ENCODE measurements at regions of chr18 and their contacts with region 1.

Region 1: DNA sequence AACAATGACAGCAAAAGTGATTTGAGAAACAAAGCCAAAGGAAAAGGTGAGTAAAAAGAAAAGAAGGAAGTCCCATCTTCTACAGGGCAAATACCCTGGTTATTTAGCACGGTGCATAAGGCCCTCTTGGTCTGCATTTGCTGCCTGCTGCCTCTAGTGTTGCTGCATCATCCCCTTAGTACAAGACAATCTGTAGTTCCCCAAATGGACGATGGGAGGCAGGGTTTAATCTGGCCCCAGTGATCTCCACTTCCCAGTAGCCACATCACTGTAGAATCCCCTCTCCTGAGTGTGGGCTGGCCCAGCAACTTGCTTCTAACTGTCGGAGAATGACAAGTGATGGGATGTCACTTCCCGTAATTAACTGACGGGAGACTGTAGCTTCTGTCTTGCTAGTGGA is 85.1 kb downstream of the CTAGE1 start:
- DNase-seq: no peak
- ATAC-seq: no peak
- H3K4me3 ChIP-seq: no peak overlapping the region
- H3K27ac ChIP-seq: no peak overlapping the region
- H3K4me1 ChIP-seq: no peaks in the 10 kb centered on the region
- H3K27me3 ChIP-seq: no peaks in the 10 kb centered on the region
- CTCF ChIP-seq: no peak
- POLR2A ChIP-seq: no peak

Region 2: GRCh38 chr18:21904856-21905255 is 427.7 kb before region 1 on chr18:
- in situ Hi-C with region 1: no loop called
- intact Hi-C with region 1: no loop called
- DNase-seq: no peak
- ATAC-seq: no peak
- H3K4me3 ChIP-seq: no peak overlapping the region
- H3K27ac ChIP-seq: no peak overlapping the region
- H3K4me1 ChIP-seq: no peaks in the 10 kb centered on the region
- H3K27me3 ChIP-seq: peaks cover 0 to 4% (median 0%) of the 10 kb centered on the region in 3 donors
- CTCF ChIP-seq: no peak
- POLR2A ChIP-seq: no peak

Region 3: DNA sequence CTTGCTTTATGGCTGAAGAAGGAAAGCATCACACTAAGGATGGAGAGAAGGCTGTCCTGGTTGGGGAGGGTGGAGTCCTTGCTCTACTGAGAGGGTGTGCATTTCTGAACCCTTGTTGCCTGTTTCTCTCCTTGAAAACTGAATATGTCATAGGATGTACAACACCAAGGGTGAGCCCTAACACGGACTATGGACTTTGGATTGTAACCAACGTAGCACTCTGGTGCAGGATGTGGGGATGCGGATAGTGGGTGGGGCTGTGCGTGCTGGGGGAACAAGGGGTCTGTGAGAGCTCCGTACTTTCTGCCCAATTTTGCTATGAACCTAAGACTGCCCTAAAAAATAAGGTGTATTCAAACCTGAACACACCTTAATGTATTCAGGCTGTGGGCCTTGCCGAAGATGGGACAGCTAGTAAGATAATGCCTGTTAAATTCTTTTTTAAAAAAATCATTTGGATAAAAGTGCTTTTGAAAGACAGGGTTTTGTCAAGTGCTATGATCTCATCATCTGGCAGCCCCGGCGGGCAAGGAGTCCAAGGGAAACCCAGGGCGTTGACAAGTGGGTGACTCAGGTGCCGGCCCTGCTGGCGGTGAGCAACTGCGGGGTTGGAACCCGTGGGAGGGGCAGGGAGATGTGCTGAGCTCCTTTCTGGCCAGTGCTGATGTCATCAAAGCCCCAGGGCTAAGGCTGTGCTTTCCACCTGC is 109.2 kb before region 1 on chr18:
- in situ Hi-C with region 1: no loop called
- intact Hi-C with region 1: no loop called
- DNase-seq: peak; percentile 9 to 56
- ATAC-seq: no peak
- H3K4me3 ChIP-seq: no peak overlapping the region
- H3K27ac ChIP-seq: no peak overlapping the region
- H3K4me1 ChIP-seq: no peaks in the 10 kb centered on the region
- H3K27me3 ChIP-seq: no peaks in the 10 kb centered on the region
- CTCF ChIP-seq: no peak
- POLR2A ChIP-seq: no peak

Region 4: DNA sequence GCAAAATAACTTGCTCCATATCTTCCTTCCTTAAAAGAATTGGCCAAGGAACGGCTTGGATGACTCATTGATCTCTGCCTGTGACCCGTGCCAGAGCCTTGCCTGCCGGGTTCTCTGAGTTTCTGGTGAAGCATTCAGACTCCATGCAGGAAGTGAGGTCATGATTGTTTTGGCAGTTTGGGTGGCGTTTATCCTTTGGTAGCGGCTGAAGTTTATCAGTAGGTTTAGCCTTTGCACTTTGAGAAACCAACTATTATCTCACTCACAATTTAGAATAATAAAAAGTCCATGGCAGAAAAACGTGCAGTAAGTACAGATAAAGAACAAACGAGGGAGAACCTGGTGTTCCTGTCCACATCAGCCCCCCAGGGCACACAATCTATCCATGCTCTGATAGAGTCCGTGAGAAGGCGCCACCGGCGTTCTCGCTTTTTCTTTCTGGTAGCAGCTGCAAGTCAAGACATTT is 100.1 kb after region 1 on chr18:
- in situ Hi-C with region 1: loop called in 1 of 4 experiments (anchors 25 kb)
- intact Hi-C with region 1: loop called (anchors 10 kb)
- DNase-seq: peak; percentile 12 to 61
- ATAC-seq: peak; percentile 58 to 85
- H3K4me3 ChIP-seq: no peak overlapping the region
- H3K27ac ChIP-seq: peak overlapping the region in 2 of 4 donors; percentile 28 to 50
- H3K4me1 ChIP-seq: no peaks in the 10 kb centered on the region
- H3K27me3 ChIP-seq: no peaks in the 10 kb centered on the region
- CTCF ChIP-seq: no peak
- POLR2A ChIP-seq: no peak

Region 5: DNA sequence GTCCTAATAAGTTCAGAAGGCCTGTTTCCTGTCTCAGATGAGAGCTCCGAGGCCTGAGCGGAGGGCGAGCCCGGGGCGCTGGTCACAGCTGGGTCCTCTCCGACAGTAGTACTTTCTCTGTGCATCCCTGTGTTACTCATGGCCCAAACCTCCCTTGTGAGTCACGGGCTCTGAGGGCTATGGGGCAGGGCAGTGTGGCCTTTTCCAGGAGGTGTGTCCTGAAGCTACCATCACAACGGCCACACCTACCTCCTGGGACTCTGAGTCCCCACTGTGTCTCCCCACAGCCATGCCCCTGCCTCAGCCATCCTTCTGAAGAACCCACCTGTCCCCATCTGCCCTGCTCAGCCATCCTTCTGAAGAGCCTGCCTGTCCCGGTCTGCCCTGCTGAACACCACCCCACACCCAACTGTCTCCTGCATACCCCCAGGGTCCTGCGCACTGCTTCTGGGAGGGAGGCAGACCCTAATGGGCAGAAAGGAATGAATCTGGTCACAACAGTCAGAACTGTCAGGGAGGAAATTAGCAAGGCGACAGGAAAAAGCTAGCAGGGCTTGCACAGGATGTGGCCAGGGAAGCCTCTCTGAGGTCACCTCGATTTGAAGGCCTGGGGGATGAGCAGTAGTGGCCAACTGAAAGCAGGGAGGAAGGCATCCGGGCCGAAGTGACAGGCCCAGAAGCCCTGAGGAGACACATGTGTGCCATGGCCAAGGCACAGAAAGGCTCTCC is 975.1 kb after region 1 on chr18:
- in situ Hi-C with region 1: no loop called
- intact Hi-C with region 1: no loop called
- DNase-seq: no peak
- ATAC-seq: no peak
- H3K4me3 ChIP-seq: no peak overlapping the region
- H3K27ac ChIP-seq: no peak overlapping the region
- H3K4me1 ChIP-seq: no peaks in the 10 kb centered on the region
- H3K27me3 ChIP-seq: no peaks in the 10 kb centered on the region
- CTCF ChIP-seq: no peak
- POLR2A ChIP-seq: no peak

Measured in gastrocnemius medialis (tissue), 4 donors.